Heart right ventricle (tissue), 16 donors: ENCODE measurements at regions of chr15 and their contacts with region 1.

Region 1: GRCh38 chr15:33737687-33738601 is 230.4 kb upstream of the CHRM5 start:
- DNase-seq: peak in 1 of 2 donors; percentile 14
- ATAC-seq: peak in 2 of 8 donors; percentile 55 to 59
- H3K4me3 ChIP-seq: no peak overlapping the region
- H3K27ac ChIP-seq: no peak overlapping the region
- H3K4me1 ChIP-seq: peaks cover 0 to 5% (median 0%) of the 10 kb centered on the region in 9 donors
- H3K27me3 ChIP-seq: peaks cover 0 to 6% (median 0%) of the 10 kb centered on the region in 7 donors
- CTCF ChIP-seq: peak; percentile 49 to 79 (median 70)

Region 2: GRCh38 chr15:33753012-33753411 is 15.1 kb after region 1 on chr15:
- intact Hi-C with region 1: no loop called
- DNase-seq: no peak
- ATAC-seq: no peak
- H3K4me3 ChIP-seq: no peak overlapping the region
- H3K27ac ChIP-seq: no peak overlapping the region
- H3K4me1 ChIP-seq: no peaks in the 10 kb centered on the region
- H3K27me3 ChIP-seq: peaks cover 0 to 6% (median 0%) of the 10 kb centered on the region in 7 donors
- CTCF ChIP-seq: no peak

Region 3: GRCh38 chr15:33788906-33789540 is 51.1 kb after region 1 on chr15:
- intact Hi-C with region 1: no loop called
- DNase-seq: no peak
- ATAC-seq: peak in 1 of 8 donors; percentile 58
- H3K4me3 ChIP-seq: no peak overlapping the region
- H3K27ac ChIP-seq: no peak overlapping the region
- H3K4me1 ChIP-seq: no peaks in the 10 kb centered on the region
- H3K27me3 ChIP-seq: peaks cover 0 to 4% (median 0%) of the 10 kb centered on the region in 7 donors
- CTCF ChIP-seq: no peak

Region 4: DNA sequence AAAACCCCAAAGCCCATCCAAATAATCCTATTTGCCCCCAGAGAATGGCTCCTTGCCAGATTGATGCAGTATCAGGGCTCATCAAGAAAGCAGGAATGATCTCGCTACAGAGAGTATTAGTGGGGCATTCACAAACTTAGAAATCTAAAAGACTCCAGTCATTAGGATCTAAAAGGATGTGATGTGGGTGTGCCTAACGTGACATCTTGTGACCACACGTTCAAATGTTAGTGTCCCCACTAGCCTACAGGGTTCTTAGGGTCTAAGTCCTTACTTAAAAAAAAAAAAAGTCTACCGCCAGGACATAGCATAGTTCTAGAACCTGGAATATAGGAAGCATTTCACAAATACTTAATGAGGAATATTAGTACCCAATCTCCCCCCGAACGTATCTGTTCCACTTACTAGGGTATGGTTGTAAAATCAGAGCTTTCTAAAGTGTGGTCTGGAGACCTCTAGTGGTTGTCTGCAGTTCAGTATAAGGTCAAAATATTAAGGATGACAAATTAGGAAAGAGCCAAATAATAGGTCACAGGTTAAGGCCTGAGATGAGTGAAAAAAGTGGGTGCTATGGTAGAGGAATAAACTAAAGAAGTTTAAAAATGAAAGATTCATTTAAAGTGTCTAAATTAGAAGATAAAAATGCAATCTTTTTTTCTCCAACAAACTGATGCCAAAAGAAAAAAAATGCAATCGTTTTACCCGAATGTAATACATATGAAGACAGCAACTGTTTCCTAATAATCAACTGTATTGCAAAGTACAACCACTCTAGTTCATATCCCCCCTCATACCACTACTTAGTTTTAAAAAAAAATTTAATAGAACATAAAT is 226.1 kb after region 1 on chr15:
- intact Hi-C with region 1: loop called in 6 of 10 experiments (anchors 5 to 10 kb)
- DNase-seq: no peak
- ATAC-seq: peak in 1 of 8 donors; percentile 42
- H3K4me3 ChIP-seq: no peak overlapping the region
- H3K27ac ChIP-seq: no peak overlapping the region
- H3K4me1 ChIP-seq: peaks cover 0 to 8% (median 0%) of the 10 kb centered on the region in 9 donors
- H3K27me3 ChIP-seq: no peaks in the 10 kb centered on the region
- CTCF ChIP-seq: peak in 8 of 9 donors; percentile 19 to 69 (median 60)

Region 5: DNA sequence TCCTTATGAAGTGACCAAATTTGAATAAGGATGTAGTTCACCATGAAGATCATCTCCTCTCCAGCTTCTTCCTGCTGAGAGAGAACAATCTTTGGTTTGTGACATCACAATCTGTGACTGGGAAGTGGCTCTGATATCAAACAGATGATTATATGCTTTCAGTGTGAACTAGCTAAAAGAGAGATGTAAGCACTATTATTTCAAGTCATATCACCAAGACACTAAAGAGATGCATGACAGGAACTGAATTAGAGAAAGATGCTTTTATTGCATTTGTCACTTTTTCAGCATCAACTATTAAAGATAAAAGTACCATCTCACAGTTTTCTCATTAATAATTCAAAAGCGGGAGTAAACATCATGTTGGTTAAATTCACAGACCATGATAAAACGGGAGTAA is 233.9 kb after region 1 on chr15:
- intact Hi-C with region 1: loop called in 5 of 10 experiments (anchors 5 to 10 kb)
- DNase-seq: no peak
- ATAC-seq: no peak
- H3K4me3 ChIP-seq: no peak overlapping the region
- H3K27ac ChIP-seq: no peak overlapping the region
- H3K4me1 ChIP-seq: peaks cover 0 to 8% (median 0%) of the 10 kb centered on the region in 9 donors
- H3K27me3 ChIP-seq: no peaks in the 10 kb centered on the region
- CTCF ChIP-seq: no peak